ENCODE measurements at regions of chr2 and their contacts with region 1.

Region 1: DNA sequence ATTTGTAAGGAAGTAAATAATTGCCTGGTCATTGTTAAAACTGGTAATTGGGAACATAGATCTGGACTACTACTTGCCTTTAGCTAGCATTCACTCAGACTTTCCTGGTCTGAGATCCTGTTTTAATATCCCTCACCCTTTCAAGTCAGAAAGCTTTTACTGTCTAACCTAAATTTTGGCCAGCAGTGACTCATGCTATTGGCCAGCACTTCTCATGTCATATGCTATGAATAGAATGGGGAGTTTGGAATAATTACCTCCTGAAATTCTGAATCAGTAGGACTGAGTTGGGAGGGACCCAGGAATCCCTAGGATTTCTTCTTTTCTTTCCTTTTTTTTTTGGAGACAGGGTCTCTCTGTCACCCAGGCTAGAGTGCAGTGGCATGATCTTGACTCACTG is 19.3 kb downstream of the STK36 start:
- DNase-seq: peak; percentile 10
- H3K4me3 ChIP-seq: no peak overlapping the region
- H3K27ac ChIP-seq: no peak overlapping the region
- H3K27me3 ChIP-seq: no peaks in the 10 kb centered on the region
- CTCF ChIP-seq: no peak

Region 2: GRCh38 chr2:218671654-218672566 is 19.3 kb before region 1 on chr2 and contains the starts of genes RNF25 and STK36:
- CTCF ChIA-PET with region 1: interaction called, 49 read pairs
- POLR2A ChIA-PET with region 1: interaction called, 7 read pairs
- DNase-seq: peak; percentile 74
- H3K4me3 ChIP-seq: peak within 1 kb of the TSS; percentile 95
- H3K27ac ChIP-seq: peak within 1 kb of the TSS; percentile 77
- H3K27me3 ChIP-seq: no peaks in the 10 kb centered on the region
- CTCF ChIP-seq: no peak
- polyA plus RNA-seq, gene RNF25: 57.5 and 76.3 TPM in 2 replicates
- polyA plus RNA-seq, gene STK36: 52.5 and 53.1 TPM in 2 replicates

Region 3: DNA sequence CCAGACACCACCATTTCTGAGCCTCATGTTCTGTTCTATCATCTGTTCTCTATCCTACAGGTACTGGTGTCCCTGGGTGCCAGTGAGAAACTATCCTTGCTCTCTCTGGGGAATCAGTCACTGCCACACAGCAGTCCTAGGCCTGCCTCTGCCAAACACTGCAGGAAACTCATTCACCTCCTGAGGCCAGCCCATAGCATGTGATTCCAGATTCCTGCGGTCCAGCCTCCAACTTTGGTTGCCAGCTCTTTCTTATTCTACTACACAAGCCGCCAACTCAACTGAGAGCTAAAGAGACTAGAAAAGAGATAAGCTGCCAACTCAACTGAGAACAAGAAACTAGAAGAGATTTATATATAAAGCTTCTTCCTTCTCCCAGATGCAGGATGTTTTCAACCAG is 10.6 kb after region 1 on chr2:
- CTCF ChIA-PET with region 1: interaction called, 15 read pairs
- POLR2A ChIA-PET with region 1: interaction called, 4 read pairs
- DNase-seq: no peak
- H3K4me3 ChIP-seq: no peak overlapping the region
- H3K27ac ChIP-seq: no peak overlapping the region
- H3K27me3 ChIP-seq: no peaks in the 10 kb centered on the region
- CTCF ChIP-seq: no peak